A549 (cell line): ENCODE measurements at regions of chr9 and their contacts with region 1.

Region 1: DNA sequence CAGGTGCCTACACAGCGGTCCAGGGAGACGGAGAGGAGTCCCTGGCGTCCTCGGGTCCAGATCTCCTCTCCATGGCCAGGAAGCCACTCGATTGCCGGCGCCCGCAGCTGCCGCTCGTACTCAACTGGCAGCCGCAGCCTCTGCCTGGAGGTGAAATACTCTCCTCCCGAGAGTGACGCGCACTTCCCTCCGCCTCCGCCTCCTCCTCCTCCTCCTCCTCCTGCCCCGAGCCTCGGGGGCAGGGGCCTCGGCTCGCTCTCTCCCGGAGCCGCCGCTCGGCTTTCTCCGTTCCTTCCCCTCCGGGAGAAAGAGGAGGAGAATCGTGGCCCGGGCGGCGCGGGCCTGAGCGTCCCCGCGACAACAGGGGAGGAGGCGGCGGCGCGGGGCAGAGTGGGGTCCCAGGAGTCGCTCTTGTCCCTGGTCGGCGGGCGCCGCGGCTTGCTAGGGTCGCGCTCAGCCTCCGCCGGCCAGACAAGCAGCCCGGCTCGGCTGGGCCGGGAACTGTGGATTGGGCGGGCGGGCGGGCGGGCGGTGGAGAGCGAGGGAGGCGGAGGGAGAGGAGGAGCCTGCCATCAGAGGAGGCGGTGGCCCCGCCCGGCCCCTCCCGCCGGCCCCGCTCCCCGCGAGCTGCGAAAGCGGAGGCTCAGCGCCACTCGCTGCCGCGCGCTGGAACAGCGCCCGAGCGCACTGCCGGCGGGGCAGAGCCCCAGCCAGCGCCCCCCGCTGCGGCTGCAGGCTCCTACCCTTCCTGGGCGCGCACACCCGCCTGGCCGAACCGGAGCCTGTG is at the start of gene CEMIP2:
- DNase-seq: peak; percentile 60 to 89
- ATAC-seq: peak; percentile 80 to 88
- H3K4me3 ChIP-seq: peak within 1 kb of the TSS; percentile 94
- H3K27ac ChIP-seq: peak within 1 kb of the TSS; percentile 91 to 97
- H3K4me1 ChIP-seq: peaks cover 30% of the 10 kb centered on the region
- CTCF ChIP-seq: peak; percentile 71
- EP300 ChIP-seq: no peak
- POLR2A ChIP-seq: peak; percentile 98
- RAD21 ChIP-seq: peak; percentile 70 to 92
- polyA plus RNA-seq, gene CEMIP2: 161 and 236 TPM in 2 replicates

Region 2: DNA sequence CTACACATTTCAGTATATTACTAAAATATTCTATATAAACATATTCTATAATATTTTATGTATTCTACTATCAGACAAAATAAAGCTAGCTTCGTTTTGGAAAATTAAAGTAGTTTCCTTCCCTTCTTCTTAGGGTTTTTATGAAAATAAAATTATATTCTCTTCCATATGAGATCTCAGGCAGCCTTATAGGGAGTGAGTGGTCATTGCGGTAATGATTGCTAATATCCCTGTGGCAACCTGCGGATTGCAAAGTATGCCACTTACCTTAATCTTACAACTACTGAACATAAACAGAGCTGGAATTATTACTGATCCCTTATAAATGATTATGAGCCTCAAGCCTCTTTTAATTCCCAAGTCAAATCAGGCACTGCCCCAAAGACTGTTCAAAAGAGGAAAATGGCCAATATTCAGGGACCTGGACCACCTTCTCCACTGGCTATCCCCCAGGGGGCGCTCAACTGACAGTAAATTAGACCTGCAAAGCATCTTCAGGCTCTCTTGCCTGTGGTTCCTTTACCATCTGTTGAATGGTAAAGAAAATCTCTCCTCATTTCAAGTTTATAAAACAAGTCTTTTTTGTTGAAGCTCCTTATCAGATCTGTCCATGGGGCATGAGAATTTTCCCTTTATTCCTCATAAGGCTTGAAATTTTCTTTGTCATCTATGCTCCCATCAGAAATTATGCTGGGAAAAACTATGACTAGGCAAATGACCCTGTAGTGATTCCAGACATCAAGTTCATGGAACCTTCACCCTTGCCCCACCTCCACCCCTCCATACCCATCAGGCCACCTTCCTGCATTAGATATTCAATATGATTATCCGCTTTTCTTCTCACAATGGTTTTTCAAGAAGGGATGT is 164.2 kb before region 1 on chr9:
- CTCF ChIA-PET with region 1: interaction called, 47 read pairs
- POLR2A ChIA-PET with region 1: interaction called, 3 read pairs
- DNase-seq: peak; percentile 44 to 78
- ATAC-seq: peak; percentile 89 to 99
- H3K4me3 ChIP-seq: no peak overlapping the region
- H3K27ac ChIP-seq: peak overlapping the region; percentile 54 to 56
- H3K4me1 ChIP-seq: peaks cover 17% of the 10 kb centered on the region
- CTCF ChIP-seq: peak; percentile 90
- EP300 ChIP-seq: no peak
- POLR2A ChIP-seq: no peak
- RAD21 ChIP-seq: peak; percentile 94

Region 3: GRCh38 chr9:71628247-71628646 is 140.3 kb before region 1 on chr9:
- CTCF ChIA-PET with region 1: no interaction called
- POLR2A ChIA-PET with region 1: no interaction called
- DNase-seq: no peak
- ATAC-seq: no peak
- H3K4me3 ChIP-seq: no peak overlapping the region
- H3K27ac ChIP-seq: no peak overlapping the region
- H3K4me1 ChIP-seq: peaks cover 18% of the 10 kb centered on the region
- CTCF ChIP-seq: 0 out of 3 replicates have a peak, but pooled peaks have one; percentile 14
- EP300 ChIP-seq: no peak
- POLR2A ChIP-seq: no peak
- RAD21 ChIP-seq: peak in 1 of 2 experiments; percentile 38; a peak in 1 of 5 replicates

Region 4: GRCh38 chr9:71683598-71684235 is 84.9 kb before region 1 on chr9:
- CTCF ChIA-PET with region 1: interaction called, 16 read pairs
- POLR2A ChIA-PET with region 1: interaction called, 4 read pairs
- DNase-seq: no peak
- ATAC-seq: no peak
- H3K4me3 ChIP-seq: no peak overlapping the region
- H3K27ac ChIP-seq: peak overlapping the region; percentile 93 to 94
- H3K4me1 ChIP-seq: peaks cover 89% of the 10 kb centered on the region
- CTCF ChIP-seq: no peak
- EP300 ChIP-seq: no peak
- POLR2A ChIP-seq: no peak
- RAD21 ChIP-seq: peak; percentile 45 to 48; a peak in 2 of 5 replicates

Region 5: GRCh38 chr9:71725590-71726338 is 42.8 kb before region 1 on chr9:
- CTCF ChIA-PET with region 1: interaction called, 38 read pairs
- POLR2A ChIA-PET with region 1: interaction called, 4 read pairs
- DNase-seq: peak; percentile 70 to 93
- ATAC-seq: peak; percentile 96 to 97
- H3K4me3 ChIP-seq: no peak overlapping the region
- H3K27ac ChIP-seq: peak overlapping the region; percentile 71 to 81
- H3K4me1 ChIP-seq: peaks cover 78% of the 10 kb centered on the region
- CTCF ChIP-seq: no peak
- EP300 ChIP-seq: peak; percentile 87 to 88; a peak in 4 of 5 replicates
- POLR2A ChIP-seq: no peak
- RAD21 ChIP-seq: peak; percentile 11 to 50; a peak in 3 of 5 replicates

Region 6: GRCh38 chr9:71783120-71783530 is 14.5 kb after region 1 on chr9:
- CTCF ChIA-PET with region 1: interaction called, 15 read pairs
- POLR2A ChIA-PET with region 1: interaction called, 6 read pairs
- DNase-seq: peak in 1 of 2 experiments; percentile 49
- ATAC-seq: peak; percentile 79 to 91
- H3K4me3 ChIP-seq: no peak overlapping the region
- H3K27ac ChIP-seq: peak overlapping the region; percentile 50 to 62; a peak in 5 of 6 replicates
- H3K4me1 ChIP-seq: peaks cover 25% of the 10 kb centered on the region
- CTCF ChIP-seq: no peak
- EP300 ChIP-seq: 0 out of 5 replicates have a peak, but pooled peaks of 1 of the 2 experiments have one; percentile 24
- POLR2A ChIP-seq: no peak
- RAD21 ChIP-seq: peak; percentile 26 to 34; a peak in 1 of 5 replicates

Region 7: GRCh38 chr9:71819115-71819739 is 50.6 kb after region 1 on chr9:
- CTCF ChIA-PET with region 1: interaction called, 19 read pairs
- POLR2A ChIA-PET with region 1: no interaction called
- DNase-seq: peak; percentile 21 to 37
- ATAC-seq: no peak
- H3K4me3 ChIP-seq: no peak overlapping the region
- H3K27ac ChIP-seq: no peak overlapping the region
- H3K4me1 ChIP-seq: peaks cover 9% of the 10 kb centered on the region; the same call in 1 of the 3 replicates
- CTCF ChIP-seq: peak; percentile 91
- EP300 ChIP-seq: no peak
- POLR2A ChIP-seq: no peak
- RAD21 ChIP-seq: peak; percentile 75 to 79

Region 8: DNA sequence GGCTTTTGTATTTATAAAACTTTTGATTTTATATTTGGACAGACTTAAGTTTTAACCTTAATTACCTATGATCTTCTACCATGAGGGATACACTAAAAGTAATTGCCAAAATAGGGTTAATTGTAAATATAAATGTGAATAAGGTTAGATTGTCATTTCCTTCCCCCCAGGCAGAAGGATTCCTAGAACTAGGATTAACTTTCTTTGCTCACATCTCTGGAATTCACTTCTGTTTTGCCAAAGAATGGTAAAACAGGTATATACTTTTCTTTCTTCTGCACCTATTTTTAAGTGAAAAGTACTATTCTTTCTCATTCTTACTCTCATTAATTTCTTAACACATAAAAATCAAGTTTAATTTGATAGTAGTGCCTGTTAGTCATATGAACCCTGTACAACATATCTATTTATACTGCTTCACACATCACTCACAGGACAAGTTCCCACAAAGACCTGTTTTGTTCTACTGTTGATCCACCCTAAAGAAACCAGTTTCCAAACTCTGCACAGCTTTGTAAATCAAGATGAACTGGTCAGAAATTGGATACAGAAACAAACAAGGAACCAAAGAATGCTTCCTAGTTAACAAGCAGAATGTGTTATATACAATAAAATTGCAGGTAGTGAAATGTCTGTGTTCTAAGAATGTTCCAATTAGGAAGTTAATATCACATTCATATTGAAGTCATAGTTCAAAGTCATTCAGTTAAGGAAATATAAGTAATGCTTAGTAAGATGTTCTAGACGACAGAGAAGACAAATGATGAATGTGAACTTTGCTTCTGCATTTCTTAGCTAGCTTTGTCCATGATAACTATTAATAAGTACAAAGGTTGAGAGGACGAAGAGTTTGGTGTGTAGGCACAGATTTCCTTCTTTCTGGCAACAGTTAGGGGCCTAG is 176.1 kb after region 1 on chr9:
- CTCF ChIA-PET with region 1: no interaction called
- POLR2A ChIA-PET with region 1: no interaction called
- DNase-seq: no peak
- ATAC-seq: no peak
- H3K4me3 ChIP-seq: no peak overlapping the region
- H3K27ac ChIP-seq: no peak overlapping the region
- H3K4me1 ChIP-seq: peaks cover 7% of the 10 kb centered on the region; the same call in 1 of the 3 replicates
- CTCF ChIP-seq: no peak
- EP300 ChIP-seq: no peak
- POLR2A ChIP-seq: no peak
- RAD21 ChIP-seq: no peak